ENCODE measurements at regions of chr6 and their contacts with region 1.

Region 1: DNA sequence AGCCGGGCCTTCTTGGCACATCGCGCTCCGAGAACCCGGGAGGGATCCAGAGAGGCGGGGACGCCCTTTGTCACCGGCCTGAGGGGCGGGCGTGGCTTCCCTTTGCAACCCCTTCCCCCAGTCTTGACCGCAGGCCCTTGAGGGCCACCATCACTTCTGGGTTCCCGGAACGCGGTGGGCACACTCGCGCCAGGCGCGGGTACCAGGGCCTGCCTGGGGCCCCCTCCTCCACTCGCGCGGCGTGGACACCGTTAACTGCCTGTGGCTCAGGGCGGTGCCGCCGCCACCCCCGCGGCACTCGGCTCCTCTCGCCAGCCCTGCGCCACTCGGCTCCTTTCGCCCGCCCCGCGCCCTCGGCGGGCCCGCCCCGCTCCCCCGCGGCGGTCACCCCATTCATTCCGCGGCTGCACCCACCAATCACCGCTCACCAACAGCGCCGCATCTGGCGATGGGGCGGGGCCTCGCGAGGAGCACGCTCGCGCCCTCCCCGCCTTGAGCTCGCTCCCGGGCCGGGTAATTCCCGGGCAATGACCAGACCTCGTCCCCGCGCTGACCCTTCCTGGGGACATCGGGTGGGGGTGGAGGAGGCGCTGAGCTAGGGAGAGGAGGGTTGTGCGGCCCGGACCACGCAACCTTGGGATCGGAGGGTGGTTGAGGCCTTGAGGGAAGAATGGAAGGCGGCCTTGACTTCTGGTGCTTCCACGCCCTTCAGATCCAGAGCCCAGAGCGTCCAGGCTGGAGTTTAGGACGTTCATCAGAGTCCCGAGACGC is 10.5 kb upstream of the ELOVL5 start:
- DNase-seq: peak; percentile 96 to 97
- ATAC-seq: peak; percentile 96 to 99 (median 98)
- H3K4me3 ChIP-seq: peak overlapping the region; percentile 48 to 89 (median 70)
- H3K27ac ChIP-seq: peak overlapping the region; percentile 89 to 98 (median 96)
- H3K4me1 ChIP-seq: peaks cover 4 to 23% (median 14%) of the 10 kb centered on the region in 9 donors
- H3K27me3 ChIP-seq: no peaks in the 10 kb centered on the region
- CTCF ChIP-seq: peak in 1 of 9 donors; percentile 26

Region 2: GRCh38 chr6:52566853-52567279 is 792.4 kb before region 1 on chr6:
- intact Hi-C with region 1: loop called in 1 of 10 experiments (anchors 5 kb)
- DNase-seq: no peak
- ATAC-seq: peak in 2 of 8 donors; percentile 55 to 80
- H3K4me3 ChIP-seq: no peak overlapping the region
- H3K27ac ChIP-seq: peak overlapping the region in 7 of 10 donors; percentile 57 to 82 (median 72)
- H3K4me1 ChIP-seq: peaks cover 15 to 100% (median 71%) of the 10 kb centered on the region in 9 donors
- H3K27me3 ChIP-seq: no peaks in the 10 kb centered on the region
- CTCF ChIP-seq: no peak

Region 3: DNA sequence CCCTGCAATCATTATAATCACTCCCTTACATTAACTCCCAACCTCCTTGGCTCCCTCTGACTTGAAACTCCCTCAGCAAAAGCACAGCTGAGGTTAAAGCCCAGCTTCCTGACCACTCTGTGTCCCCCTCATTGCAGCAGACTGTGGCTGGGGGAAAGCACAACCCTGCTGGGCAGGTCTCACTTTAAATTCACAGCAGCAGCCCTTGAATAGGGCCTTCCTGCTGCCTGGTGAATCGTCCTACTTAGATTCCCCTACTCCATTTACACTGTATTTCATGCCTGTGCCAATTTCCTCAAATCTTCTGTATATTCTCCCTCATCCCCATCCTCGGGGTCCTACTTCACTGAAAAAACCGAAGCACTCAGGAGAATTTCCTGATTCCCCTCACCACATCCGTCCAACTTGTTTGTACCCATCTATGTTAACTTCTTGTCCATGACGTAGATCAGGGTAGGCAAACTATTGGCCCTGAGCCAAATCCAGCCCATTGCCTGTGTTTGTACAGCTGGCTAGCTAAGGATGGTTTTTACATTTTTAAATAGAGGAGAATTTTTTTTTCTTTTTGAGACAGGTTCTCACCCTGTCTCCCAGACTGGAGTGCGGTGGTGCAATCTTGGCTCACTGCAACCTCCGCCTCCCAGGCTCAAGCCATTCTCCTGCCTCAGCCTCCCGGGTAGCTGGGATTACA is 179.2 kb before region 1 on chr6:
- intact Hi-C with region 1: loop called in 2 of 10 experiments (anchors 5 to 10 kb)
- DNase-seq: peak; percentile 25 to 53
- ATAC-seq: peak in 7 of 8 donors; percentile 33 to 79 (median 58)
- H3K4me3 ChIP-seq: no peak overlapping the region
- H3K27ac ChIP-seq: peak overlapping the region in 6 of 10 donors; percentile 7 to 57 (median 26)
- H3K4me1 ChIP-seq: peaks cover 0 to 10% (median 0%) of the 10 kb centered on the region in 9 donors
- H3K27me3 ChIP-seq: no peaks in the 10 kb centered on the region
- CTCF ChIP-seq: no peak

Region 4: GRCh38 chr6:53284901-53285300 is 74.4 kb before region 1 on chr6:
- intact Hi-C with region 1: loop called in 1 of 10 experiments (anchors 5 kb)
- DNase-seq: no peak
- ATAC-seq: no peak
- H3K4me3 ChIP-seq: no peak overlapping the region
- H3K27ac ChIP-seq: no peak overlapping the region
- H3K4me1 ChIP-seq: peaks cover 3 to 56% (median 35%) of the 10 kb centered on the region in 9 donors
- H3K27me3 ChIP-seq: no peaks in the 10 kb centered on the region
- CTCF ChIP-seq: no peak

Region 5: DNA sequence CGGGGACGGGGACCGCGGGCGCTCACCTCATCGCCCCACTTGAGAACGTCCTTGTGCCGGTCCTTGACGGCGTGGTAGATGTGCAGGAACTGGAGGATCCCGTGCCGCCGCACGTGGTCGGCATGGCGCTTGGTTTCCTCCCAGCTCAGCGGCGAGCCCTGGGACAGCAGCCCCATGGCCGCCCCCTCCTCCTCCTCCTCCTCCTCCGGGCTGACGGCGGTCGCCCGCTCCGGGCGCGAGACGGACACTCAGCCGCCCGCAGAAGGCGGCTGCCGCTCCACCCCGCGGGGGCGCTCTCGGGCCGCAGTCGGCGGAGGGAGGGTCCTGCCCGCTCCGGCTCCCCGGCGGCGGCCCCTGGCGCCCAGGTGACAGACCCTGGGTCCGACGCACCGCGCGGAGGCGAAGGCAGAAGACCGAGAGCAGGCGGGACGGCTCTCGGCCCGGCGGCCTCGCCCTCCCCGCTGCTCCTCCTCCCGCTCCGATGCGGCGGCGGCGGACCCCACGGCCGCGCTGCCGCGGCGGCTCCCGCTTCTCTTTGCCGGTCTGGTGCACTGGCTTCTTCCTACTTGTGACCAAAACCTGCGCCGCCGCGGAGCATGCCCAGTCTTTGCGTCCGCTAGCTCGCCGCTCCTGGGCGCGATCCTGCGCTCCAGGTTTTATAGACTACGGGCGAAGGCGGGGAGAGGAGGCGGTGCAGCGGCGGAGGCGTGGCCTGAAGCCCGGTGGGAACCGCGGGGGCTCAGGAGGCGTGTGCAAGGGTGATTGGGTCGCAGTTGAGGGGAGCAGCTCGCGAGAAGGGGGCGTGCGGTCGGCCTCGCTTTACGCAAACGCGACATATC is 185.4 kb after region 1 on chr6 and contains the start of gene GCLC:
- intact Hi-C with region 1: loop called in 1 of 10 experiments (anchors 5 kb)
- DNase-seq: peak; percentile 95
- ATAC-seq: peak; percentile 80 to 88 (median 83)
- H3K4me3 ChIP-seq: peak within 1 kb of the TSS; percentile 55 to 94 (median 82)
- H3K27ac ChIP-seq: peak within 1 kb of the TSS; percentile 46 to 99 (median 95)
- H3K4me1 ChIP-seq: peaks cover 0 to 56% (median 42%) of the 10 kb centered on the region in 9 donors
- H3K27me3 ChIP-seq: no peaks in the 10 kb centered on the region
- CTCF ChIP-seq: peak; percentile 49 to 88 (median 70)
- total RNA-seq, gene GCLC: 13.9 to 42.8 (median 34.6) TPM

Region 6: GRCh38 chr6:53813096-53813495 is 453.8 kb after region 1 on chr6:
- intact Hi-C with region 1: no loop called
- DNase-seq: no peak
- ATAC-seq: no peak
- H3K4me3 ChIP-seq: no peak overlapping the region
- H3K27ac ChIP-seq: no peak overlapping the region
- H3K4me1 ChIP-seq: peaks cover 0 to 41% (median 7%) of the 10 kb centered on the region in 9 donors
- H3K27me3 ChIP-seq: no peaks in the 10 kb centered on the region
- CTCF ChIP-seq: no peak

Region 7: GRCh38 chr6:54100411-54101006 is 741.3 kb after region 1 on chr6:
- intact Hi-C with region 1: no loop called
- DNase-seq: no peak
- ATAC-seq: no peak
- H3K4me3 ChIP-seq: no peak overlapping the region
- H3K27ac ChIP-seq: no peak overlapping the region
- H3K4me1 ChIP-seq: peaks cover 0 to 58% (median 22%) of the 10 kb centered on the region in 9 donors
- H3K27me3 ChIP-seq: no peaks in the 10 kb centered on the region
- CTCF ChIP-seq: no peak

Measured in heart right ventricle (tissue), 16 donors.